ENCODE measurements at regions of chr22 and their contacts with region 1.

Region 1: DNA sequence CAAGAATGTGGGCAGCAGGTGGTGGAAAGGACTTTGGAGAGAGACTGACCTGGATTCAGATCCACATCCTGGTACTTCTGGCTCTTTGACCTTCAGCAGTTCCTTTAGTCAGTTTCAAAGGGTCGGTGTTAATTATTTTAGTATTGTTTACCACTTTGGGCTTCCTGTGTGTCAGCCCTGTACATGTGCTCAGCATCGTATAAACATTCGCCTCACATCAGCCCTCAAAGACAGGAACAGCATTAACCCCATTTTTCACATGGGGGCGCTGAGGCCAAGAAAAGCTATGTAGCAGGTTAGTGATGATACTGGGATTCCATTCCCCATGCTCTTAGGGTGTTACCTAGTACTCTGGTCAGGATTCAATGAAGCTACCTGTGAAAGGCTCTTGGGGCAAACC is 72.1 kb upstream of the YWHAH start:
- DNase-seq: peak; percentile 31
- H3K4me3 ChIP-seq: no peak overlapping the region
- H3K27ac ChIP-seq: peak overlapping the region; percentile 90
- H3K4me1 ChIP-seq: peaks cover 22% of the 10 kb centered on the region
- H3K27me3 ChIP-seq: no peaks in the 10 kb centered on the region
- CTCF ChIP-seq: peak in 1 of 2 donors; percentile 11
- POLR2A ChIP-seq: no peak

Region 2: GRCh38 chr22:31838917-31839316 is 33.3 kb before region 1 on chr22:
- CTCF ChIA-PET with region 1: no interaction called
- POLR2A ChIA-PET with region 1: no interaction called
- dilution Hi-C with region 1: no loop called
- intact Hi-C with region 1: no loop called
- DNase-seq: no peak
- H3K4me3 ChIP-seq: no peak overlapping the region
- H3K27ac ChIP-seq: no peak overlapping the region
- H3K4me1 ChIP-seq: no peaks in the 10 kb centered on the region
- H3K27me3 ChIP-seq: no peaks in the 10 kb centered on the region
- CTCF ChIP-seq: no peak
- POLR2A ChIP-seq: no peak

Region 3: DNA sequence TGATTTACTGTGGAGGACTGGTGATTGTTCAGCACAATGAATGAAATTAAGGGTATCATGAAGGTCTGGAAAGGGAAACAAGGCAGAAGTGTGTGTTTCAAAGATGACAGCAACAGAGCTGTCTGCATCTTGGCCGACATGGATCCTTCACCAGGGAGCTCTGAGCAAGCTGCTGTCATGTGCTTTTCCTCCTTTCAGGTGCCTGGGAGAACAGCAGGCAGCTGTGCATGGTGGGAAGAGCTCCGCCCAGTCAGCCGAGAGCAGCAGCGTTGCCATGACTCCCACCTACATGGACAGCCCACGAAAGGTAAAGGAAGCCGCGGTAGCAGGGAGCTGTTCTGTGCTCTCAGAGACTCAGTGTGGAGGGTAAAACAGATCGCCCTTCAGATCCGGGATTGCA is 15.0 kb before region 1 on chr22:
- CTCF ChIA-PET with region 1: interaction called, 11 read pairs
- POLR2A ChIA-PET with region 1: no interaction called
- dilution Hi-C with region 1: no loop called
- intact Hi-C with region 1: no loop called
- DNase-seq: no peak
- H3K4me3 ChIP-seq: no peak overlapping the region
- H3K27ac ChIP-seq: no peak overlapping the region
- H3K4me1 ChIP-seq: no peaks in the 10 kb centered on the region
- H3K27me3 ChIP-seq: no peaks in the 10 kb centered on the region
- CTCF ChIP-seq: no peak
- POLR2A ChIP-seq: no peak

Region 4: DNA sequence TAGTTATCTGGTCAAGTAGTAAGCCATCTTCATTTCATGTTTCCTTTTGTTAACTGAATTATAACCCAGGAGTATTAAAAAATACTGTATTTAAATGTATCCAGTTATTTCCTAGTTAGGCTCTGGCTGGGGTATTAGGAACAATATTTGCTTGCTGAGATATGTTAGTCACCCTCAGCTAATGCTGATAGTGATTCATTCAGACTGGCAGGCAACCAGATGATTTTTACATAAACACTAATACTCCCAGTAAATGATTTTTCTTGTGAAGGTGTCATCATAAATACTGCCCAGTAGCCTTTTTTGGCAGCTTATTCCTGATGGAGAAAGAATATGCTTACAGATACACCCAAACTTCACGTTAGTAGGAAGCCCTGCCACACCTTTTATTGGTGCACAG is 80.2 kb after region 1 on chr22:
- CTCF ChIA-PET with region 1: interaction called, 17 read pairs
- POLR2A ChIA-PET with region 1: no interaction called
- dilution Hi-C with region 1: no loop called
- intact Hi-C with region 1: no loop called
- DNase-seq: peak; percentile 89
- H3K4me3 ChIP-seq: no peak overlapping the region
- H3K27ac ChIP-seq: peak overlapping the region; percentile 74
- H3K4me1 ChIP-seq: peaks cover 45% of the 10 kb centered on the region
- H3K27me3 ChIP-seq: no peaks in the 10 kb centered on the region
- CTCF ChIP-seq: no peak
- POLR2A ChIP-seq: no peak